Activated CD4-positive, alpha-beta T cell treated with anti-CD3 and anti-CD28 coated beads for 36 hours (primary cell): ENCODE measurements at regions of chr17 and their contacts with region 1.

Region 1: DNA sequence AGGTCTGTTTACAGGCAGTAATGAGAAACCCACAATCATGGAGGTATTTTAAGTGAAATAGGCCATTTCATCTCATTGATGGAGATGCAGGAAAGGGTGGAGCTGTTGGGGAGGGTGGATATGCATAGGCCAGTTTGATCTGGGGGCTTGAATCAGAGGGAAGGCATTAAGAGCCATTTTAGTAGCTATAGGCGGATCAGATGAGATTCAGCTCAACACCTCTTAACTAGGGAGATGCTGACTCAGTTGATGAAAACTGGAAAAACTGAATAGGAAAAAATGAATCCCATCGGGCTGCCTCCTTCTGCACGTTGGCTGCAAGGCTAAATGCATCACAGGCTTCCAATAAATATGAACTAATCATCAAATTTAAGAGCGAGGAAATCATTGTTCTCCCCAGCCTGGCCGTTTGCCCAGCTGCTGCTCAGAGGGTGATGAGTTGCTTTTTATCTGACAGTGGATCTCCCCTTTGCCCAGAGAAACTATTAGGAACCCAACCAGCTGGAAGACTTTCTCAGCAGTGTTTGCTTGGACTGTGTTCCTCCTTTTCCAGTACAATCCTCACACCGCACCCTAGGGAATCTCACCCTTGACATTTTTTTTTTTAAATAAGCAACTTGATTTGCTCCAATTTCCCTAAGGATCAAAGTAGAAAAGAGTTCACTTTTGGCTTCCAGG is 149.6 kb downstream of the SOX9 start:
- DNase-seq: no peak
- ATAC-seq: no peak
- H3K4me3 Mint-ChIP-seq: no peak overlapping the region
- H3K27ac Mint-ChIP-seq: no peak overlapping the region
- H3K4me1 Mint-ChIP-seq: no peaks in the 10 kb centered on the region
- H3K27me3 Mint-ChIP-seq: peaks cover 6% of the 10 kb centered on the region

Region 2: GRCh38 chr17:72332367-72332766 is 62.0 kb after region 1 on chr17:
- CTCF ChIA-PET with region 1: no interaction called
- POLR2A ChIA-PET with region 1: no interaction called
- intact Hi-C with region 1: loop called in 1 of 2 experiments (anchors 5 kb)
- DNase-seq: no peak
- ATAC-seq: no peak
- H3K4me3 Mint-ChIP-seq: no peak overlapping the region
- H3K27ac Mint-ChIP-seq: no peak overlapping the region
- H3K4me1 Mint-ChIP-seq: no peaks in the 10 kb centered on the region
- H3K27me3 Mint-ChIP-seq: peaks cover 9% of the 10 kb centered on the region

Region 3: DNA sequence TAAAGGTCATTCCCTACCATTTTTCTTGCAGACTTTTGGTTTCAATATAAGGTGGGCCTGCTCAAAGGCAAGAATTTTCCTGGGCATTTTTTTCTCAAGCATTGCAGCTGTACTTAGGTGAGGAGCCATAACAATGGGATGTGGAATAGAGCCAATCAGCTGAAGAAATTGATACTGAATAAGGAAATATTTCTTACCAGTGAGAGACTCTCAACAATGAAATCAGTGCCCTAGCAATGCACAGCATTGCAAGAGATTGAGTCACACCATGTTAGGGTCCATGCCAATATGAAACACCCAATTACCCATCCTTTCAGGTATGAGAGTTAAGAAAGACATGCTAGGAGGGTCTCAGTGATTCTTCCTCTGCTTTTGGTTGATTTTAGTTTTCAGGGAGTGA is 88.1 kb after region 1 on chr17:
- CTCF ChIA-PET with region 1: no interaction called
- POLR2A ChIA-PET with region 1: no interaction called
- intact Hi-C with region 1: loop called in 1 of 2 experiments (anchors 10 kb)
- DNase-seq: no peak
- ATAC-seq: no peak
- H3K4me3 Mint-ChIP-seq: no peak overlapping the region
- H3K27ac Mint-ChIP-seq: no peak overlapping the region
- H3K4me1 Mint-ChIP-seq: no peaks in the 10 kb centered on the region
- H3K27me3 Mint-ChIP-seq: no peaks in the 10 kb centered on the region

Region 4: GRCh38 chr17:72456026-72456569 is 185.7 kb after region 1 on chr17:
- CTCF ChIA-PET with region 1: no interaction called
- POLR2A ChIA-PET with region 1: no interaction called
- intact Hi-C with region 1: no loop called
- DNase-seq: no peak
- ATAC-seq: no peak
- H3K4me3 Mint-ChIP-seq: no peak overlapping the region
- H3K27ac Mint-ChIP-seq: no peak overlapping the region
- H3K4me1 Mint-ChIP-seq: no peaks in the 10 kb centered on the region
- H3K27me3 Mint-ChIP-seq: peaks cover 1% of the 10 kb centered on the region